CD4-positive, alpha-beta memory T cell (primary cell): ENCODE measurements at regions of chr11 and their contacts with region 1.

Region 1: DNA sequence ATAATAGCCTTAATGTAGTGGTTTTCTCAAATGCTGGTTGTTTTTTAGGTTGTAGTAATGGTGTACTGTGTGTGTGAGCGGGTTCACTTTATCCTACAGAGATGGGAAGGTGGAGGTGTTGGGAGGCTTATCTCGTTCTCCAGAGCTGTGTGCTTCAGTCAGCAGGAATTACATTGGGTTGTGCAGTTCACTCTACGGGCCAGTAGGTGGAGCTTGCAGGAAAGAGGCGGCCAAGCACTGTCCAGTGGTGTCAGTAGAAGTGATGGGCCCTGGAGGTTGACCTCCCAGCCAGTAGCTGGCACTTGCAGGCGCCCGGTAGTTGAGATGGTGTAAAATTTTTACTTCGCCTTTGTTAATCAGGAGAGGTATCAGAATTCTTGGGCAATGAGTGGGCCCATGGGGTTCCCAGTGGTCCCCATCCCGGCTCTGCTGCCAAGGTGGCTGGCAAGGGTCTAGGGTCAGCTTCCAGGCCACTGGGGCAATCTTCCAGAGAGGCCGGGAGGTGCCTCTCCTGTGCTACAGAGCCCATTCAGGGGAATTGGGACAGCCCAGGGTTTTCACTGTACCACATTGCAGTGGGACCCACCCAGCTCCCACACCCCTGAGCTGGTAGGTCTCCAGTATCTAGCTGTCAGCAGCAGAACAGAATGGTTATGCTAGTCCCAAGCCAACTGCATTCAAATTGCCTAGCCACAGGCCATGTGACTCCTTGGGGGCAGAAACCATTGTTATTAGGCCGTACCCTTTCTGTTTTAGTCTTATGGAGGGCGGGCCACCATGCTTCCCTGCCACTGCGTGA is 43.9 kb downstream of the BIRC2 start:
- DNase-seq: peak; percentile 44 to 56 (median 53)
- H3K4me3 ChIP-seq: no peak overlapping the region
- H3K4me3 Mint-ChIP-seq: no peak overlapping the region
- H3K27ac ChIP-seq: no peak overlapping the region
- H3K27ac Mint-ChIP-seq: peak overlapping the region in 6 of 7 donors; percentile 15 to 83 (median 65)
- H3K4me1 ChIP-seq: peaks cover 11% of the 10 kb centered on the region
- H3K4me1 Mint-ChIP-seq: peaks cover 17 to 40% (median 21%) of the 10 kb centered on the region in 4 donors
- H3K27me3 ChIP-seq: no peaks in the 10 kb centered on the region
- H3K27me3 Mint-ChIP-seq: no peaks in the 10 kb centered on the region

Region 2: GRCh38 chr11:101166038-101166437 is 1224.8 kb before region 1 on chr11:
- CTCF ChIA-PET with region 1: no interaction called
- POLR2A ChIA-PET with region 1: no interaction called
- intact Hi-C with region 1: no loop called
- DNase-seq: no peak
- H3K4me3 ChIP-seq: no peak overlapping the region
- H3K4me3 Mint-ChIP-seq: no peak overlapping the region
- H3K27ac ChIP-seq: no peak overlapping the region
- H3K27ac Mint-ChIP-seq: no peak overlapping the region
- H3K4me1 ChIP-seq: no peaks in the 10 kb centered on the region
- H3K4me1 Mint-ChIP-seq: no peaks in the 10 kb centered on the region
- H3K27me3 ChIP-seq: no peaks in the 10 kb centered on the region
- H3K27me3 Mint-ChIP-seq: no peaks in the 10 kb centered on the region

Region 3: GRCh38 chr11:102007567-102008437 is 383.1 kb before region 1 on chr11:
- CTCF ChIA-PET with region 1: no interaction called
- POLR2A ChIA-PET with region 1: no interaction called
- intact Hi-C with region 1: no loop called
- DNase-seq: peak in 4 of 5 donors; percentile 34 to 48 (median 38)
- H3K4me3 ChIP-seq: no peak overlapping the region
- H3K4me3 Mint-ChIP-seq: no peak overlapping the region
- H3K27ac ChIP-seq: no peak overlapping the region
- H3K27ac Mint-ChIP-seq: no peak overlapping the region
- H3K4me1 ChIP-seq: peaks cover 4% of the 10 kb centered on the region
- H3K4me1 Mint-ChIP-seq: peaks cover 2 to 7% (median 5%) of the 10 kb centered on the region in 4 donors
- H3K27me3 ChIP-seq: peaks cover 5% of the 10 kb centered on the region
- H3K27me3 Mint-ChIP-seq: peaks cover 0 to 9% of the 10 kb centered on the region in 2 donors

Region 4: GRCh38 chr11:102293873-102294601 is 96.8 kb before region 1 on chr11:
- CTCF ChIA-PET with region 1: interaction called, 39 read pairs
- POLR2A ChIA-PET with region 1: interaction called, 3 read pairs
- intact Hi-C with region 1: no loop called
- DNase-seq: peak; percentile 57 to 74 (median 71)
- H3K4me3 ChIP-seq: peak overlapping the region in 1 of 2 donors; percentile 52
- H3K4me3 Mint-ChIP-seq: peak overlapping the region; percentile 86 to 99 (median 96)
- H3K27ac ChIP-seq: peak overlapping the region; percentile 62
- H3K27ac Mint-ChIP-seq: peak overlapping the region; percentile 78 to 99 (median 97)
- H3K4me1 ChIP-seq: peaks cover 34% of the 10 kb centered on the region
- H3K4me1 Mint-ChIP-seq: peaks cover 20 to 58% (median 36%) of the 10 kb centered on the region in 4 donors
- H3K27me3 ChIP-seq: no peaks in the 10 kb centered on the region
- H3K27me3 Mint-ChIP-seq: no peaks in the 10 kb centered on the region

Region 5: GRCh38 chr11:102367364-102367763 is 23.5 kb before region 1 on chr11:
- CTCF ChIA-PET with region 1: interaction called, 24 read pairs
- POLR2A ChIA-PET with region 1: no interaction called
- intact Hi-C with region 1: loop called (anchors 2 kb)
- DNase-seq: peak in 4 of 5 donors; percentile 41 to 53 (median 50)
- H3K4me3 ChIP-seq: no peak overlapping the region
- H3K4me3 Mint-ChIP-seq: peak overlapping the region in 3 of 8 donors; percentile 7 to 27 (median 17)
- H3K27ac ChIP-seq: no peak overlapping the region
- H3K27ac Mint-ChIP-seq: peak overlapping the region; percentile 33 to 93 (median 72)
- H3K4me1 ChIP-seq: peaks cover 21% of the 10 kb centered on the region
- H3K4me1 Mint-ChIP-seq: peaks cover 27 to 37% (median 28%) of the 10 kb centered on the region in 4 donors
- H3K27me3 ChIP-seq: no peaks in the 10 kb centered on the region
- H3K27me3 Mint-ChIP-seq: no peaks in the 10 kb centered on the region

Region 6: DNA sequence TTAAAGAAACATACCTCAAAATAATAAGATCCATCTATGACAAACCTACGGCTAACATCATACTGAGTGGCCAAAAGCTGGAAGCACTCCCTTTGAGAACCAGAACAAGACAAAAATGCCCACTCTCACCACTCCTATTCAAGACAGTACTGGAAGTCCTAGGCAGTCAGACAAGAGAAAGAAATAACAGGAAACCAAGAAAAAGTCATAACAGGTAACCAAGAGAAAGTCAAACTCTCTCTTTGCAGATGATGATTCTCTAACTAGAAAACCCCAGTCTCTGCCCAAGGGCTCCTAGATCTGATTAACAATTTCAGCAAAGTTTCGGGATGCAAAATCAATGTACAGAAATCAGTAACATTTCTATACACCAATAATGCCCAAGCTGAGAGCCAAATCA is 26.1 kb after region 1 on chr11:
- CTCF ChIA-PET with region 1: interaction called, 33 read pairs
- POLR2A ChIA-PET with region 1: interaction called, 3 read pairs
- intact Hi-C with region 1: no loop called
- DNase-seq: peak in 2 of 5 donors; percentile 12 to 17
- H3K4me3 ChIP-seq: peak overlapping the region in 1 of 2 donors; percentile 5
- H3K4me3 Mint-ChIP-seq: peak overlapping the region; percentile 75 to 88 (median 82)
- H3K27ac ChIP-seq: peak overlapping the region; percentile 4
- H3K27ac Mint-ChIP-seq: peak overlapping the region; percentile 58 to 94 (median 92)
- H3K4me1 ChIP-seq: peaks cover 98% of the 10 kb centered on the region
- H3K4me1 Mint-ChIP-seq: peaks cover 82 to 96% (median 88%) of the 10 kb centered on the region in 4 donors
- H3K27me3 ChIP-seq: no peaks in the 10 kb centered on the region
- H3K27me3 Mint-ChIP-seq: no peaks in the 10 kb centered on the region

Region 7: DNA sequence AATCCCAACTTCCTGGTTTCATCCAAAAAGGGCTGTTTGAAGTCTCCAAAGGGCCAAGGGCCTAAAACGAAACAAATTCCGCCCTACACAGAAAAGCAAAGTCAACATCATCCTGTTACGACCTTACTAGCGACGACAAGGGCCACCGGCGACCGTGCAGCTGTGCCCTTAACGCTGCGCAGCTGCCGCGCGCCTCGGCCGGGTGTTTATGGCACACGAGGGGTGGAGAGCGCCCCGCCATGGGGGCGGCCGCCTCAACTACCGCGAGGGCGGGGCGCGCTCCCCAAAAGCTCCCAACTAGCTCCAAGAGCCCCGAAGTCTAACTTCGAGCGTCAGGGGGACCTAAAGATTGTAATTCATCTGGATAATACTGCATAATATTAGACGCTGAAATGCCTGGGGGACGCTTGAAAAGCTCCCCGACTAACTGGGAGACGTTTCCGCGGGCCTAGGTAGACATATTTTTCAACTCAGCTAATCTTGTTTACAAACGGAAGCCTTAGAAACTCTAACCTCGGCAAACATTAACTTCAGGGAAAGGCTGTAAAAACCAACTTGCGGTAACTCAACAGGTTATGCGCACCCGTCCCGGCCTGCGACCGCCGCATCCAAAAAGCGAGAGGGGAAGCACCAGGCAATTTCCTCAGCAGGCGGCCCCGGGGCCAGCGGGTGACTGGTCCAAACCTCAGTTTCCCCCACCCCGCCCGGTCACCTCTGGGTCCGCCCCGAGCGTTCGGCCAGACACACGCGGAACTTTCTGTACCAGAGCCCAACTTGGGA is 61.0 kb after region 1 on chr11:
- CTCF ChIA-PET with region 1: interaction called, 99 read pairs
- POLR2A ChIA-PET with region 1: interaction called, 17 read pairs
- intact Hi-C with region 1: loop called (anchors 1 kb)
- DNase-seq: peak; percentile 78 to 82 (median 82)
- H3K4me3 ChIP-seq: peak overlapping the region; percentile 83 to 94
- H3K4me3 Mint-ChIP-seq: peak overlapping the region; percentile 89 to 99 (median 98)
- H3K27ac ChIP-seq: peak overlapping the region; percentile 86
- H3K27ac Mint-ChIP-seq: peak overlapping the region; percentile 94 to 98 (median 97)
- H3K4me1 ChIP-seq: peaks cover 70% of the 10 kb centered on the region
- H3K4me1 Mint-ChIP-seq: peaks cover 63 to 93% (median 76%) of the 10 kb centered on the region in 4 donors
- H3K27me3 ChIP-seq: no peaks in the 10 kb centered on the region
- H3K27me3 Mint-ChIP-seq: no peaks in the 10 kb centered on the region

Region 8: DNA sequence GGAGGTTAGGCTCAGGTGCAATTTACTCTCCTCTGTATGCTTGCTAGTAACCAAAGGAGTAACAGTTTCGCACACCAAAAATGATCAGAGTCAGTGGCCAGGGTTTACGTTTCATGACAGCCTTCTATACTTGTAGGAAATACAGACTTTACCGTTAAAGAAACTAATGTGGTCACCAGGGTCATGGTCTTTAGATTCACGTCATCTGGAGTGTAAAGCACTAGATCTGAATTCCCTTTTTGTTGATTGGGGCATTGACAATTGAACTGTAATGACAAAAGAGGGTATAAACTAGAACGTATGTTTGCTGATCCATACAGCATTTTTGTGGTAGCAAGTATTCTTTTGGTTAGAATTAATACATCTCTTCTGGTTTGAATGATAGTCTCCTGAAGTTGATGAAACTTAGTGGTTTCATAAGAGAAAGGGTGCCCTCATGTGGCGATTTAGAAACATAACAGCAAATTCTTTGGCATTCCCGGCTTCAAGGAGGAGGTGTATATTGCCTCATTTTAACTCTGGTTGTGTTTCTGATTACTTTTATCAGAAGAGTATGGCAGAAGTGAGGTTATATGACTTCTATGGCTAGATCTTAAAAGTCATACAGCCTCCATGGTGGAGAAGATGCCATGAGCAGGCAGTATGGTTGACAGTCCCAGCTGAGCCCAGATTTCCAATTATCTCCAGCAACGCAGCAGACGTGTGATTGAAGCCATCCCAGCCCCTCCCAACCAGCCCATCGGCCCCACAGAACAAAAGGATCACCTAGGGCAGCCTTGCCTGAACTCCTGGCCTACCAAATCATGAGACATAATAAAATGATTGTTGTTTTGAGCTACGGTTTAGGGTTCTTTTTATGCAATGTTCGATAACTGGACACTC is 104.5 kb after region 1 on chr11:
- CTCF ChIA-PET with region 1: interaction called, 77 read pairs
- POLR2A ChIA-PET with region 1: interaction called, 5 read pairs
- intact Hi-C with region 1: loop called (anchors 1 kb)
- DNase-seq: peak; percentile 59 to 75 (median 73)
- H3K4me3 ChIP-seq: no peak overlapping the region
- H3K4me3 Mint-ChIP-seq: peak overlapping the region in 1 of 8 donors; percentile 6
- H3K27ac ChIP-seq: no peak overlapping the region
- H3K27ac Mint-ChIP-seq: no peak overlapping the region
- H3K4me1 ChIP-seq: peaks cover 4% of the 10 kb centered on the region
- H3K4me1 Mint-ChIP-seq: peaks cover 0 to 7% (median 5%) of the 10 kb centered on the region in 4 donors
- H3K27me3 ChIP-seq: peaks cover 4% of the 10 kb centered on the region
- H3K27me3 Mint-ChIP-seq: peaks cover 5 to 7% of the 10 kb centered on the region in 2 donors